Right cardiac atrium (tissue), 5 donors: ENCODE measurements at regions of chr4 and their contacts with region 1.

Region 1: DNA sequence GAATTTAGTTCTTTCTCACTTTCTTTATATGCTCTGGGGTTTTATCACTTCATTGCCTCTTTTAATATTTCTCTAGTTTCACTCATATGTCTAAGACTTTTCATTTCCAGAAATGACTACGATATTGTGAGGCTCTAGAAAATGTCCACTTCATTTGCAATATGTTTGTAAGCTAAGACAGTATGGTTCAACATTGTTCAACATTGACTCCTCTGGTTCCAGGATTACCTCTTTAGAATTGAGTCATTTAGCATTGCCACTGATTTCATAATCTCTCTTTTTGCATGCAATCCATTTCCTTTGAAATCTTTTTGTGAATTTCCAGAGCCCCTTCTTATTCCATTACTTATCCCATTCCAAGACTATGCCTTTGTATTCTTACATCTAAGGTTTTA is 32.3 kb downstream of the BBS12 start:
- DNase-seq: no peak
- ATAC-seq: no peak
- H3K4me3 ChIP-seq: no peak overlapping the region
- H3K27ac ChIP-seq: no peak overlapping the region
- H3K4me1 ChIP-seq: no peaks in the 10 kb centered on the region
- H3K27me3 ChIP-seq: no peaks in the 10 kb centered on the region

Region 2: GRCh38 chr4:122379239-122379638 is 385.6 kb before region 1 on chr4:
- intact Hi-C with region 1: no loop called
- DNase-seq: peak in 1 of 3 donors; percentile 35
- ATAC-seq: no peak
- H3K4me3 ChIP-seq: no peak overlapping the region
- H3K27ac ChIP-seq: no peak overlapping the region
- H3K4me1 ChIP-seq: no peaks in the 10 kb centered on the region
- H3K27me3 ChIP-seq: no peaks in the 10 kb centered on the region

Region 3: GRCh38 chr4:122928930-122929329 is 164.1 kb after region 1 on chr4:
- intact Hi-C with region 1: loop called in 1 of 4 experiments (anchors 5 kb)
- DNase-seq: no peak
- ATAC-seq: no peak
- H3K4me3 ChIP-seq: no peak overlapping the region
- H3K27ac ChIP-seq: no peak overlapping the region
- H3K4me1 ChIP-seq: no peaks in the 10 kb centered on the region
- H3K27me3 ChIP-seq: no peaks in the 10 kb centered on the region